Caki2 (cell line): ENCODE measurements at regions of chr12 and their contacts with region 1.

Region 1: DNA sequence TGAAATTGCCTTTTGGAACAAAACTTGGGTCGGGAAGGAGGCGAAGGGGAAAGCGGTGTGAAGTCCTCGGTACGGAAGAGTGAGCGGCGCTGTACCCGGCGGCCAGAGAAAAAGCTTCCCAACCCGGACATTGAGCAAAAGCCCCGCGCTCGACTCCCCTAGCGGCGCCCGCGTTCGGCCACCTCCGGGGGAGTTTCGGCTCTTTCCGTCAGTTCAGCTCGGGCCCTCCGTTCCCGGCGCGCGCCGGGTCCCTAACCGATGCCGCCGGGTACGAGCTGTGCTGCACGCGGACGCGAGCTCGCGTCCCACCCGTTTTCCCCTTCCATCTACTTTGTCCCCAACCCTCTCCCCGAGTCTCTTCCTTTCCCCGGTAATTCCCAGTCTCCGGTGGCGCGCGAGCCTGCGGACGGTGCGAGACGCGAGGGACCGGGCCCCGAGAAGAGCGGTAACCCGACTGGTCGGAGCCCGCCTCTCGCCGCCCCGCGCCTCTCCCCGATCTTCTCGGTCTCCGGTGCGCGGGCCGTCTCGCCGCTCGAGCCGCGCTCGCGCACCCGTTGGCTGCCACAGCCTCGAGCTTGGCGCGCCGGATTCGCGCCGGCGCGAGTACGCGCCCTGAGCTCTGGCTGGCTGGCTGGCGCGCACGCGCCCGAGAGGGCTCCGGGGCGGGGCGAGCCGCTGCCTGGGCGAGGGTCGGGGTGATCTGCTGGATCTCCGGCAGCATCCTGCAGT is 446 bp upstream of the SPATS2 start:
- DNase-seq: peak; percentile 97

Region 2: DNA sequence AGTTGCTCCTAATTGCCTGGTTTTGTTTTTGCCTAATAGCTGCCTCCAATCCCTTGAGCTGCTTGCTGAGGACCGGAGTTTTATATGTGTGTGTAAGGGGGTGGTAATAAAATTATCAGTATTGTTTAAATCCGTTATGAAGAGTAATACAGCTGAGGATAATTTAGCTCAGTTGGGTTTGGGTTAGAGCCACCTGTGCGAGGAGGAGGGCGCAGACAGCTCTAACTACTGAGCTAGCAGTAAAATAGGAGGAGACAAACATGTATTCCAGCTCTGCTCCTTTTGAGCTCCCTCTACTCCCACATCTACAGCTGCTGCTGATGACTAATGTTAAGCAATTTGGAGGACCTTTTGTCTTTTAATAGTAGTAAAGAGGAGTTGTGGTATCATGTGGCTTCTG is 62.0 kb after region 1 on chr12:
- in situ Hi-C with region 1: no loop called
- DNase-seq: peak; percentile 8

Region 3: GRCh38 chr12:49496417-49497360 is 129.9 kb after region 1 on chr12:
- in situ Hi-C with region 1: loop called (anchors 5 kb)
- DNase-seq: no peak